Heart left ventricle (tissue), 16 donors: ENCODE measurements at regions of chr9 and their contacts with region 1.

Region 1: GRCh38 chr9:99563364-99563763 is 258.3 kb upstream of the NR4A3 start:
- DNase-seq: no peak
- ATAC-seq: no peak
- H3K4me3 ChIP-seq: no peak overlapping the region
- H3K27ac ChIP-seq: no peak overlapping the region
- H3K4me1 ChIP-seq: peaks cover 0 to 30% (median 5%) of the 10 kb centered on the region in 12 donors
- H3K27me3 ChIP-seq: no peaks in the 10 kb centered on the region
- CTCF ChIP-seq: no peak
- POLR2A ChIP-seq: no peak

Region 2: GRCh38 chr9:99253772-99254431 is 309.5 kb before region 1 on chr9:
- intact Hi-C with region 1: no loop called
- DNase-seq: no peak
- ATAC-seq: no peak
- H3K4me3 ChIP-seq: no peak overlapping the region
- H3K27ac ChIP-seq: no peak overlapping the region
- H3K4me1 ChIP-seq: peaks cover 0 to 26% (median 3%) of the 10 kb centered on the region in 12 donors
- H3K27me3 ChIP-seq: no peaks in the 10 kb centered on the region
- CTCF ChIP-seq: no peak
- POLR2A ChIP-seq: no peak

Region 3: GRCh38 chr9:99353408-99353807 is 210.0 kb before region 1 on chr9:
- intact Hi-C with region 1: loop called in 2 of 10 experiments (anchors 5 to 10 kb)
- DNase-seq: no peak
- ATAC-seq: no peak
- H3K4me3 ChIP-seq: no peak overlapping the region
- H3K27ac ChIP-seq: no peak overlapping the region
- H3K4me1 ChIP-seq: peaks cover 0 to 30% (median 5%) of the 10 kb centered on the region in 12 donors
- H3K27me3 ChIP-seq: no peaks in the 10 kb centered on the region
- CTCF ChIP-seq: no peak
- POLR2A ChIP-seq: no peak

Region 4: GRCh38 chr9:99368341-99369323 is 194.7 kb before region 1 on chr9:
- intact Hi-C with region 1: loop called in 1 of 10 experiments (anchors 10 kb)
- DNase-seq: peak in 4 of 5 donors; percentile 79 to 87 (median 82)
- ATAC-seq: peak; percentile 94 to 98 (median 97)
- H3K4me3 ChIP-seq: peak overlapping the region; percentile 9 to 63 (median 48)
- H3K27ac ChIP-seq: peak overlapping the region; percentile 12 to 93 (median 83)
- H3K4me1 ChIP-seq: peaks cover 0 to 25% (median 10%) of the 10 kb centered on the region in 12 donors
- H3K27me3 ChIP-seq: no peaks in the 10 kb centered on the region
- CTCF ChIP-seq: no peak
- POLR2A ChIP-seq: no peak

Region 5: DNA sequence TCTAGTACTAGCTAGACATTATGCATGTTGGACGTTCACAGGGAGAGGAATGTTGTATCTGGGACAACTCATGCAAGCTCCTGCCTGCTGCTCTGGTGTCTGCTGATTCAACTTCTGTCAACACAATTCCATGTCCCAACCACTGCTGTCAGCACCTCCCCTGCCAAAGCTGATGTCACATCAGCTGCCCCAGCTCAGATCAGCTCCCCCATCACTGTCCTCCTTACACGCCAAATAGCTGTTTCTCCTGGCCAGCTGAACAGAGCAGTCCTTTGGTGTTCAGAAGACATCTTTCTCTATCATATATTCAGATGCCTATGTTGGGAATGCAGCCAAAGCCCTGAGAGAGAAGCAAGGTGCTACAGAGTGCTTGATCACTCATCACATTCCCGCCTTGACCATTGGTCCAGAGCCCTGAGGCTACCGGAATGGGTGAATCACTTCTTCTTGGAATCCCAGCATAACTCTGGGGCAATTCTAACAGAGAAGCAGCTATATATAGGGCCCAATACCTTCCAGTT is 117.9 kb before region 1 on chr9:
- intact Hi-C with region 1: loop called in 3 of 10 experiments (anchors 2 to 10 kb)
- DNase-seq: peak; percentile 69 to 91 (median 79)
- ATAC-seq: peak; percentile 97 to 99 (median 98)
- H3K4me3 ChIP-seq: peak overlapping the region in 1 of 12 donors; percentile 2
- H3K27ac ChIP-seq: peak overlapping the region in 11 of 12 donors; percentile 25 to 82 (median 67)
- H3K4me1 ChIP-seq: peaks cover 0 to 21% (median 10%) of the 10 kb centered on the region in 12 donors
- H3K27me3 ChIP-seq: no peaks in the 10 kb centered on the region
- CTCF ChIP-seq: no peak
- POLR2A ChIP-seq: no peak

Region 6: GRCh38 chr9:99451112-99451606 is 112.2 kb before region 1 on chr9:
- intact Hi-C with region 1: loop called in 3 of 10 experiments (anchors 2 to 10 kb)
- DNase-seq: peak in 4 of 5 donors; percentile 49 to 82 (median 66)
- ATAC-seq: peak; percentile 97 to 99 (median 98)
- H3K4me3 ChIP-seq: no peak overlapping the region
- H3K27ac ChIP-seq: peak overlapping the region in 11 of 12 donors; percentile 34 to 84 (median 69)
- H3K4me1 ChIP-seq: peaks cover 0 to 15% (median 2%) of the 10 kb centered on the region in 12 donors
- H3K27me3 ChIP-seq: no peaks in the 10 kb centered on the region
- CTCF ChIP-seq: no peak
- POLR2A ChIP-seq: no peak

Region 7: DNA sequence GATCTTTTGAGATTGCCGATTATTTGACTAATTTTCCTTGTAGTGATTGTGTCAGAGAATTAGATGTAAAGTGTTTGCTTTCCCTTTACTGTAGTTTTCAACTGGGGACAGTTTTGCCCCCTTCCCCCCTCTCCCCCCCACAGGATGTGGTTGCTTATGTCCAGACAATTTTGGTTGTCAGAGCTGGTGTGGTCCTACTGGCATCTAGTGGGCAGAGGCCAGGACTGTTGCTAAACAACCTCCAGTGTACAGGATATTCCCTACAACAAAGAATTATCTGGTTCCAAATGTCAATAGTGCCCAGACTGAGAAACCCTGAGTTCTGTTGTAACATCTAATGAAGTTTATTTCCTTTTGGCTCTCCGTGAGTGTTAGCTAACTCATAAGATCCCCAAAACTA is 929.6 kb after region 1 on chr9:
- intact Hi-C with region 1: loop called in 1 of 10 experiments (anchors 10 kb)
- DNase-seq: peak in 1 of 5 donors; percentile 33
- ATAC-seq: peak; percentile 48 to 79 (median 56)
- H3K4me3 ChIP-seq: no peak overlapping the region
- H3K27ac ChIP-seq: no peak overlapping the region
- H3K4me1 ChIP-seq: no peaks in the 10 kb centered on the region
- H3K27me3 ChIP-seq: no peaks in the 10 kb centered on the region
- CTCF ChIP-seq: peak in 7 of 12 donors; percentile 5 to 29 (median 21)
- POLR2A ChIP-seq: no peak